Naive thymus-derived CD4-positive, alpha-beta T cell (primary cell): ENCODE measurements at regions of chr7 and their contacts with region 1.

Region 1: DNA sequence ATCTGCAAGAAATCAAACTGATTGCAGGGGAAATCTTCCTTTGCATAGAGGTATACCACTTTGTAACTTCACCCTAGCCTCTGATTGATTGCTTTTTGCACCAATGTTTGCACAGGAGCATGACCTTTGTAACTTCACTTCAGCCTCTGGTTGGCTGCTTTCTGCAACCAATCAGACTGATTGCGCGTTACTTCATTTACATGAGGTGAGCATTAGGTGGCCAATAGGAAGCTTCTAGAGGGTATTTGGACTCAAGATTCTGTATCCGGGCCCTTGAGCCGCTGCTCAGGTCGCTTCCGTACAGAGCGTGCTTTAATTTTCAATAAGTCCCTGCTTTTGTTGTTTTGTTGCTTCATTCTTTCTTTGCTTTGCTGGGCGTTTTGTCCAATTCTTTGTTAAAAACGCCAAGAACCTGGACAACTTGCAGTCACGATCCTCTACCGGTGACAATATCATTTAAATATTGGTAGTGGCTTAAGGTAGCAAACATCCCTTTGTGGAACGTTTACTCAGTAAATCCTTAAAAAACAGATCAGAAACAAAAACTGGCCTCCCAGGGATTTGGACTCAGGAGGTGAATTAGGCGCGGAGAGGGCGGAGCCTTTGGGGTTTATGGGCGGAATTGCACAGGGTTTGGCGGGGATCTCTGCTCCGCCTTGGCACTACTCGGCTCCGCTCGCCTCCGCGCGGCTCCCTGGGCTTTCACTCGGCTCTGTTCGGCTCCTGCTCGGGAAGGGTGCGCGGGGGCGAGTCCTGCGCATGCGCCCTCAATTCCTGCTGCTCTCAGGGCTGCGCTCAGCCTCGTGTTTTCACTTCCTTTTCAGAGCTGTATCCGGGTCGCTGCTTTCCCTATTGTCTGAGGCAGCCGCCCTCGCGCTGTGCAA is at the start of gene PHF14:
- DNase-seq: peak; percentile 86 to 97 (median 95)
- ATAC-seq: peak; percentile 96
- H3K4me3 ChIP-seq: peak within 1 kb of the TSS; percentile 90
- H3K4me3 Mint-ChIP-seq: peak within 1 kb of the TSS; percentile 77 to 95 (median 92)
- H3K27ac ChIP-seq: peak within 1 kb of the TSS; percentile 71
- H3K27ac Mint-ChIP-seq: peak within 1 kb of the TSS; percentile 85 to 97 (median 94)
- H3K4me1 ChIP-seq: peaks cover 9 to 20% of the 10 kb centered on the region in 2 donors
- H3K4me1 Mint-ChIP-seq: peaks cover 14 to 54% (median 38%) of the 10 kb centered on the region in 7 donors
- H3K27me3 ChIP-seq: no peaks in the 10 kb centered on the region
- H3K27me3 Mint-ChIP-seq: peaks cover 5 to 22% (median 12%) of the 10 kb centered on the region in 5 donors
- total RNA-seq, gene PHF14: 29.8 to 41.3 (median 36.7) TPM

Region 2: GRCh38 chr7:11006291-11006690 is 33.0 kb after region 1 on chr7:
- CTCF ChIA-PET with region 1: no interaction called
- POLR2A ChIA-PET with region 1: no interaction called
- intact Hi-C with region 1: no loop called
- DNase-seq: no peak
- ATAC-seq: no peak
- H3K4me3 ChIP-seq: no peak overlapping the region
- H3K4me3 Mint-ChIP-seq: peak overlapping the region in 3 of 10 donors; percentile 17 to 25 (median 23)
- H3K27ac ChIP-seq: no peak overlapping the region
- H3K27ac Mint-ChIP-seq: no peak overlapping the region
- H3K4me1 ChIP-seq: peaks cover 0 to 4% of the 10 kb centered on the region in 2 donors
- H3K4me1 Mint-ChIP-seq: peaks cover 15 to 52% (median 39%) of the 10 kb centered on the region in 7 donors
- H3K27me3 ChIP-seq: no peaks in the 10 kb centered on the region
- H3K27me3 Mint-ChIP-seq: no peaks in the 10 kb centered on the region

Region 3: GRCh38 chr7:11212080-11212711 is 238.9 kb after region 1 on chr7:
- CTCF ChIA-PET with region 1: no interaction called
- POLR2A ChIA-PET with region 1: no interaction called
- intact Hi-C with region 1: loop called in 1 of 2 experiments (anchors 5 kb)
- DNase-seq: peak in 8 of 9 donors; percentile 2 to 51 (median 37)
- ATAC-seq: peak; percentile 73
- H3K4me3 ChIP-seq: no peak overlapping the region
- H3K4me3 Mint-ChIP-seq: no peak overlapping the region
- H3K27ac ChIP-seq: no peak overlapping the region
- H3K27ac Mint-ChIP-seq: no peak overlapping the region
- H3K4me1 ChIP-seq: no peaks in the 10 kb centered on the region
- H3K4me1 Mint-ChIP-seq: peaks cover 0 to 4% (median 0%) of the 10 kb centered on the region in 7 donors
- H3K27me3 ChIP-seq: no peaks in the 10 kb centered on the region
- H3K27me3 Mint-ChIP-seq: peaks cover 0 to 20% (median 5%) of the 10 kb centered on the region in 5 donors

Region 4: GRCh38 chr7:11702938-11703337 is 729.6 kb after region 1 on chr7:
- CTCF ChIA-PET with region 1: no interaction called
- POLR2A ChIA-PET with region 1: no interaction called
- intact Hi-C with region 1: no loop called
- DNase-seq: no peak
- ATAC-seq: no peak
- H3K4me3 ChIP-seq: no peak overlapping the region
- H3K4me3 Mint-ChIP-seq: no peak overlapping the region
- H3K27ac ChIP-seq: no peak overlapping the region
- H3K27ac Mint-ChIP-seq: no peak overlapping the region
- H3K4me1 ChIP-seq: no peaks in the 10 kb centered on the region
- H3K4me1 Mint-ChIP-seq: no peaks in the 10 kb centered on the region
- H3K27me3 ChIP-seq: no peaks in the 10 kb centered on the region
- H3K27me3 Mint-ChIP-seq: no peaks in the 10 kb centered on the region